Activated CD4-positive, alpha-beta T cell treated with anti-CD3 and anti-CD28 coated beads for 36 hours (primary cell): ENCODE measurements at regions of chr3 and their contacts with region 1.

Region 1: DNA sequence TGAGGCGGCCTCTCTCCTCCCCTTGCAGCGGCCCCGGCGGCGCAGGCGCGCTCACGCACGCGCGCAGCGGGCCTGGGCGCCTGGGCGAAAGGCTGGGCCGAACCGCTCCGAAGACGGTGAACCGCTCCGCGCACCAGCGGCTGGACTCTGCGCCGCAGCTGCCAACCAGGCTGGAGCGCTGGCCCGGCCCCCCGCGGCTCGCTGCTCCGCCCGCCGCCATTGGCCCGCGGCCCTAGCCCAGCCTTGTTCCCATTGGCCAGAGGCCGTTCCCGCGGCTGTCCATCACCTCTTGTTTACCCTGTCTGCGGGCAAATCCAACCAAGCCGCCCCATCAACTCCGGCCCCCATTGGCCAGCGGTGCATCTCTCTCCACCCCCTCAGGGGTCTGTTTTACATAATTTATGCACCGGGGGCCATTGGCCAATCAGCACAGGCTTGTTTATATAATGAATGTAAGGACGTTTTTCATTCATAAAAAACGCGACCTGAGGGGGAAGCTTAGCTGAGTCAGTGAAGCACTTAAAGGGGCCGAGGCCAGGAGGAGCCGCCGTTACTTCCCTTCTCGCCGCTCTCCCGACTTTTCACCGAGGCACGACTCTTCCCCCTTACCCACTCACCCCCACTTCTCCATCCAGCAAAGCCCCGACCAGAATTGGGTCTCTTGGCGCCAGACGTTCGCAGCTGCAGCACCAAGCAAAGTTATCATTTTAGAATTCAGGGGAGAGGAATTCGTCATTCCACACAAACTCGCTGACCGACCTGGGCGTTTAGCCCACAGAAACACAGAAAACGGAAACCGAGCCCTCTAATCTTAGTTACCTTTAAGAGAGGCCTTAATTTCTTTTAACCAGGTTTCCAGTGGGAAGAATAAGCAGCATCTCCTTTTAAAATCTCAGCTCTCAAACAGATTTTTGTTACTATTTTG is at the start of gene ETV5:
- DNase-seq: peak; percentile 96
- ATAC-seq: peak; percentile 96
- H3K4me3 Mint-ChIP-seq: peak within 1 kb of the TSS; percentile 73
- H3K27ac Mint-ChIP-seq: peak within 1 kb of the TSS; percentile 42
- H3K4me1 Mint-ChIP-seq: peaks cover 34% of the 10 kb centered on the region
- H3K27me3 Mint-ChIP-seq: peaks cover 69% of the 10 kb centered on the region
- total RNA-seq, gene ETV5: 0.83 to 1.4 TPM

Region 2: DNA sequence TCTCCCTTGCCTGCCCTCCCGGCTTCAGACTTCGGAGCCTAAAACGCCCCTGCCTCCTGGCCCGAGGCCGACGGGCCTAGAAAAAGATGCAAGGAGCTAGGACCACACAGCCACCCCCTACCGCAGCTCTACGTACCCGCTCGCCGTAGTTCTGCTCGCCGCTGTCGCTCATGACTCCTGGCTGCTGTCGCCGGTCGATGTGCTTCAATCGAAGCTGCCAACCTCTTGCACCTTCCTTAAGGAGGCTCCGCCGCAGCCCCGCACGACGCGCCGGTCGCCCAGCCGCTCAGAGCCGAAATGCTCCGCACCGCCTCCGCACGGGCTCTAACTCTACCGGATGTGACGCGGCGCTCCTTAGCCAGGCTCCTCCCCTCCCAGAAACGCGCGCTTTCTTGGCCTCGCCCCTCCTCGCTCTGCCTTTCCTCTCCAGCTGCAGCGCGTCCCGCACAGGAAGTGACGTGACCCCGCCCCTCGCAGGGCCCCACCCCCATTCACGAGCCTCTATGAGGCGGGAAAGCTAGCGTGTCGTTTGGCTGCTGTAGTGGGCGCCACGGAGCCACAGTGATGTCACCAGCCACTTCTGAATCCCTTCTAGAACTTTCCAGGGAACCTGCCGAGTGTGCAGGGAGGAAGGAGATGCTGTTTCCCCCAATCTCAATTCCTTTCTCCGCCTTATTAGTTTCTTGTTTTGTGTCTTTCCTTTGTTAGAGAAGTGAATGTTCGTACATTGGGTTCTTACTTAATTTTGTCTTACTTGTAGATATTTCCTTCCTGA is 171.3 kb before region 1 on chr3 and contains the start of gene TRA2B:
- CTCF ChIA-PET with region 1: no interaction called
- POLR2A ChIA-PET with region 1: no interaction called
- intact Hi-C with region 1: loop called in 1 of 2 experiments (anchors 1 kb)
- DNase-seq: peak; percentile 100
- ATAC-seq: peak; percentile 90
- H3K4me3 Mint-ChIP-seq: peak within 1 kb of the TSS; percentile 97
- H3K27ac Mint-ChIP-seq: peak within 1 kb of the TSS; percentile 100
- H3K4me1 Mint-ChIP-seq: peaks cover 23% of the 10 kb centered on the region
- H3K27me3 Mint-ChIP-seq: no peaks in the 10 kb centered on the region
- total RNA-seq, gene TRA2B: 228 to 344 TPM

Region 3: GRCh38 chr3:186060222-186060621 is 49.0 kb before region 1 on chr3:
- CTCF ChIA-PET with region 1: no interaction called
- POLR2A ChIA-PET with region 1: no interaction called
- intact Hi-C with region 1: loop called in 1 of 2 experiments (anchors 5 kb)
- DNase-seq: peak; percentile 56
- ATAC-seq: peak; percentile 79
- H3K4me3 Mint-ChIP-seq: no peak overlapping the region
- H3K27ac Mint-ChIP-seq: no peak overlapping the region
- H3K4me1 Mint-ChIP-seq: peaks cover 9% of the 10 kb centered on the region
- H3K27me3 Mint-ChIP-seq: peaks cover 50% of the 10 kb centered on the region

Region 4: DNA sequence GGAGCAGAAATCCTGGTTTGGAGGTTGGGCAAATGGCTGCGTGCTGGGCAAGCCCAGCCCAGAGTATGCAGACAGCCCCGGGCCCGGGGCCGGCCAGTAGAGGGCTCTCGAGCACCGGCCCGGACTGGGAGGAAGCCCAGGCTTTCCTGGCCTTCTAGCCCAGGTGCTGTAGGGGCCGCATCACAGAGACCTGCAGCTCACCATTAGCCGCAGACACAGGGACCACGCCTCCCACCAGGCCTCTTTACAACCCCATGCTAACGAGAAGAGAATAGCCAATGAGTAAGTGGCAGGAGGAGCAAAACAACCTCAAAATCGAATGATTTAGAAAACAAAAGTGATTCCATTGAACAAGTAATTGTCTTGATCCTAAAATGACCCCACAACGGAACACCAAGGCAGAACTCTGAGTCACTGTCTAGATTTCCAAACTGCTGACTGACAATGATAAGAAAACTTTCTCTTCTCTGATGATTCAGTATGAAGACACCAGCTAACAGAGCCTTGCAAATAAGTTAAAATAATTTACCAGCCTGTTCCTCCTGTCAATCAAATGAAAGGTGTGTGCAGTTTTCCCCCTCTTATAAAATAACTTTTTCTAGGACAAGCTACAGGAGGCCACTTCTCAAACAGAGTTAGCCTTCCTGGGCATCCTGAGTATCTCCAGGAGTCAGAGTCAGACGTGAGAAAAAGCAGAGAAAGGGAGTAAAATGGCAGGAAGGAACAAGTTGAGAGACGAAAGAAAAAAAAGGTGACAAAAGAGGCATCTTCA is 150.6 kb after region 1 on chr3:
- CTCF ChIA-PET with region 1: interaction called, 3 read pairs
- POLR2A ChIA-PET with region 1: no interaction called
- intact Hi-C with region 1: loop called in 1 of 2 experiments (anchors 1 kb)
- DNase-seq: peak; percentile 86
- ATAC-seq: peak; percentile 89
- H3K4me3 Mint-ChIP-seq: peak overlapping the region; percentile 40
- H3K27ac Mint-ChIP-seq: peak overlapping the region; percentile 68
- H3K4me1 Mint-ChIP-seq: peaks cover 28% of the 10 kb centered on the region
- H3K27me3 Mint-ChIP-seq: no peaks in the 10 kb centered on the region

Region 5: GRCh38 chr3:186783073-186783730 is 674.0 kb after region 1 on chr3 and contains the start of gene EIF4A2:
- CTCF ChIA-PET with region 1: no interaction called
- POLR2A ChIA-PET with region 1: no interaction called
- intact Hi-C with region 1: loop called in 1 of 2 experiments (anchors 2 kb)
- DNase-seq: peak; percentile 95
- ATAC-seq: peak; percentile 69
- H3K4me3 Mint-ChIP-seq: peak within 1 kb of the TSS; percentile 100
- H3K27ac Mint-ChIP-seq: peak within 1 kb of the TSS; percentile 100
- H3K4me1 Mint-ChIP-seq: peaks cover 32% of the 10 kb centered on the region
- H3K27me3 Mint-ChIP-seq: no peaks in the 10 kb centered on the region
- total RNA-seq, gene EIF4A2: 291 to 390 TPM